ENCODE measurements at regions of chr16 and their contacts with region 1.

Region 1: GRCh38 chr16:85821441-85822135 is 22.1 kb downstream of the COX4I1 start:
- DNase-seq: peak; percentile 92
- CTCF ChIP-seq: peak; percentile 94

Region 2: GRCh38 chr16:85844786-85845185 is 23.2 kb after region 1 on chr16:
- CTCF ChIA-PET with region 1: interaction called, 16 read pairs
- POLR2A ChIA-PET with region 1: no interaction called
- DNase-seq: no peak
- CTCF ChIP-seq: no peak

Region 3: DNA sequence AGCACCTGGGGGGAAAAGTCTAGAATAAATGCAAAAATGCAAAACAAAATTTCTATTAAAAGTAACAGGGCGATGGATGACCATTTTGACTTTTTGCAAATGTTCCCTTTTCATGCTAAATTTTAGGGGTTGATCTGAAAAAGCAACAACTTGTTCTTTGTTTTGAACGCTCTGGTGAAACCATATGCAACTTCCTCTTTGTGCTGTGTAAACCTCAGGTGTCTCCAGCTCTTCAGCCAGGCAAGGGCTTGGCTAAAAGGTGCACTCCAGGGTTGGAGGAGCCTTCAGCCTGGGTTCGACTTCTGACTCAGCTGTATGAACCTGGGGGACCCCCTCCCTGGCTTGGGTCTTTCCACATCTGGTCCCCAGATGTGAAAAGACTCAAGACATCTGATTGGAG is 86.9 kb after region 1 on chr16:
- CTCF ChIA-PET with region 1: interaction called, 29 read pairs
- POLR2A ChIA-PET with region 1: interaction called, 4 read pairs
- DNase-seq: peak; percentile 70
- CTCF ChIP-seq: no peak

Region 4: DNA sequence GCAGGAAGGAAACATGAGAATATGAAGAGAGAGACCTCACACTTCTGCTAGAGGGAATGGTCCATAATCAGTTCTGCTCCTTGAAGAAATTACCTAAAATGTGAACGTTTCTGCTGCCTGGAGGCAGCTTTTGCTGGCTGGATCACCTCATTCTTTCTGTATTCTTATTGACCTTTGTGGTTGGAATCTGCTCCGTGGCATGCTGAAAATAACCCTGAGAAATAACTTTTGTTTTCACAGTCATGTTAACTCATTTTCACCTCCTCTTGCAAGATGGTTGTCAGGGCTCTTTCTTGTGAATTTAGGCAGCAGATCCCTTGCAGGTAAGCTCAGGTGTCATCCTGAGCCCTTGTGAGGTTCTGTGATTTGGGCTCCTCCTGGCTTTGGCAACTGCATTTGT is 147.6 kb after region 1 on chr16:
- CTCF ChIA-PET with region 1: interaction called, 10 read pairs
- POLR2A ChIA-PET with region 1: no interaction called
- DNase-seq: no peak
- CTCF ChIP-seq: no peak

Region 5: GRCh38 chr16:86002178-86002900 is 180.8 kb after region 1 on chr16:
- CTCF ChIA-PET with region 1: interaction called, 42 read pairs
- POLR2A ChIA-PET with region 1: no interaction called
- DNase-seq: no peak
- CTCF ChIP-seq: no peak

Region 6: GRCh38 chr16:86033016-86033474 is 211.5 kb after region 1 on chr16:
- CTCF ChIA-PET with region 1: interaction called, 13 read pairs
- POLR2A ChIA-PET with region 1: no interaction called
- DNase-seq: no peak
- CTCF ChIP-seq: no peak